ENCODE measurements at regions of chr9 and their contacts with region 1.

Region 1: GRCh38 chr9:133149126-133150107 is 14.3 kb downstream of the GBGT1 start:
- DNase-seq: peak; percentile 54
- ATAC-seq: peak; percentile 82
- H3K4me3 ChIP-seq: peak overlapping the region; percentile 53 to 66
- H3K27ac ChIP-seq: peak overlapping the region; percentile 85
- H3K4me1 ChIP-seq: peaks cover 4% of the 10 kb centered on the region; the same call in 1 of the 2 replicates
- H3K27me3 ChIP-seq: no peaks in the 10 kb centered on the region
- CTCF ChIP-seq: no peak; the same call in 1 of the 2 replicates

Region 2: GRCh38 chr9:133048569-133048968 is 100.8 kb before region 1 on chr9:
- CTCF ChIA-PET with region 1: no interaction called
- POLR2A ChIA-PET with region 1: no interaction called
- in situ Hi-C with region 1: no loop called
- intact Hi-C with region 1: loop called (anchors 10 kb)
- DNase-seq: no peak
- ATAC-seq: peak; percentile 81
- H3K4me3 ChIP-seq: no peak overlapping the region
- H3K27ac ChIP-seq: no peak overlapping the region
- H3K4me1 ChIP-seq: no peaks in the 10 kb centered on the region
- H3K27me3 ChIP-seq: no peaks in the 10 kb centered on the region
- CTCF ChIP-seq: no peak; the same call in 1 of the 2 replicates

Region 3: DNA sequence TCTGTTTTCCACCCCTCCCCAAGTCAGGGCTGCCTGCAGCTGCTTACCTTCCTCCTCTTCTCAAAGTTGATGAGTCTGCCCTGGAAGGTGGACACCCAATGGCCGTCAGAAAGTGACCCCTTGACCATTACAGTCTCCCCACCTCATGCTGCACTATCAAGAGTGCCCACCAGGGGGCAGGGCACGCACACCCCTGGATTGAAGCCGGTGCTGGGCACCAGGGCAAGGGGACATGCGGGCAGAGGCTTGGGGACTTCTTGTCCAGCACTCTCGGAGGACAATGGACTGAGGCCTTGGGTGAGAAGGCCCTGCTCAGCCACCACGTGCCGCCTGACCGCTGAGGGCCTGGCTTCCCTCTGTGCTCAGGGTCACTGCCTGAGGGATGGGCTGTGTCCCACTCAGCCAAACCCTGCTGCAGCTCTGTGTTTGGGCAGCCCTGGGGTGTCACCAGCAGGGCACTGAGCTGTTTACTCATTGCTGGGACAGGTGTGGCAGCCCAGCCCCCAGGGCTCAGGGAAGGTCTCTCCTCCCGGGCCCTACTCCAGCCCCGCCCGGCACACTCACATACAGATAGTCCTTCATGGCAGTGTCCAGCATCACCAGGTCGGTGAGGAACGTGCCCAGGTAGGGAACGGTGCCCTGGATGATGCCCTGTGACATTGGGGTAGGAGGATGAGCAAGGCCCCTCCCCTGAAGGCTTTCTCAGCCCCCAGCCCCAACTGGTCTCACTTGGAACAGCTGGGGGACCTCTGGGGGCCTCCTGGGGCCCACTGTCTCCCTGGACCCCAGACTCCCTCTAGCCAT is 46.0 kb before region 1 on chr9:
- CTCF ChIA-PET with region 1: no interaction called
- POLR2A ChIA-PET with region 1: no interaction called
- in situ Hi-C with region 1: no loop called
- intact Hi-C with region 1: loop called (anchors 2 kb)
- DNase-seq: peak; percentile 33
- ATAC-seq: peak; percentile 75
- H3K4me3 ChIP-seq: no peak overlapping the region
- H3K27ac ChIP-seq: no peak overlapping the region
- H3K4me1 ChIP-seq: no peaks in the 10 kb centered on the region
- H3K27me3 ChIP-seq: no peaks in the 10 kb centered on the region
- CTCF ChIP-seq: peak; percentile 90

Region 4: GRCh38 chr9:133160742-133161546 is 11.5 kb after region 1 on chr9:
- CTCF ChIA-PET with region 1: no interaction called
- POLR2A ChIA-PET with region 1: no interaction called
- in situ Hi-C with region 1: no loop called
- intact Hi-C with region 1: no loop called
- DNase-seq: no peak
- ATAC-seq: peak; percentile 85
- H3K4me3 ChIP-seq: no peak overlapping the region
- H3K27ac ChIP-seq: no peak overlapping the region
- H3K4me1 ChIP-seq: peaks cover 10% of the 10 kb centered on the region
- H3K27me3 ChIP-seq: no peaks in the 10 kb centered on the region
- CTCF ChIP-seq: peak; percentile 79